GM10248 (cell line): ENCODE measurements at regions of chr5 and their contacts with region 1.

Region 1: DNA sequence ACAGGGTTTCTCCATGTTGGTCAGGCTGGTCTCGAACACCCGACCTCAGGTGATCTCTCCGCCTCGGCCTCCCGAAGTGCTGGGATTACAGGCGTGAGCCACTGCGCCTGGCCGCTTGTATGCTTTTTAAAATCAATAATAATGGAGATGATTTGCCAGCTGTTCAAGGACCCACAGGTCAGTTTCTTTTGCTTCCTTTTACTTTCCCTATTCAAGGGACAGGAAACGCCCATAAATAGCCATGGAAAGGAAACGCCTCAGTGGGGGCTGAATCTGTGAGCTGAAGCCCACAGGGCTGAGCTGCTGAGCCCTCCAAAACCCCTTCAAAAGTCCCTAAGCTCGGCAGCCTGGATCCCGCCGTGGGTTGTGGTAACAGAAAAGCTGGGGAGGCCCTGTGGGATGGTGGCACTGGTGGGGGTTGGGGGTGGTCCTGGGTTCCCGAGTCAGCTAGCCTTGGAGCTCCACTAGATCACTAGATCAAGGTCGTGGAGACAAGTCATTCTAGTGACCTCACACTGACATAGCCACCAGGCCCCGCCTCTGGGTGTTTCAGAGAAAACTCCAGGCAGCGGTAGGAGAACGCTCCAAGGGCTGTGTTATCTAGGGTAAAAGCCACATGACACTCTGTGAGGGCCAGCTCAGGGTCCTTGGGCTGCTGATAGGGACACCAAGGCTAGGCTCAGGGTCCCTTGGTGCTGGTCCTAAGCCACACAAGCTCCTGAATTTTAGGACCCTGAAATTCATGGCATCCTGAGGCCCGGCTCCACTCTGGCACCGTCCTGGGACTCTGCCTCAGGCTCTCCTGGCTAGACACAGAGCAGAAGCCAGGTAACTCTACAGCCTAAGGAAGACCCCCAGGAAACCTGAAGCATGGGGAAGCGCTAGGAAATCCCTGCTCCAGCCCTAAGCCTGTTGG is 18.0 kb upstream of the DUSP1 start:
- DNase-seq: peak; percentile 55
- CTCF ChIP-seq: no peak

Region 2: DNA sequence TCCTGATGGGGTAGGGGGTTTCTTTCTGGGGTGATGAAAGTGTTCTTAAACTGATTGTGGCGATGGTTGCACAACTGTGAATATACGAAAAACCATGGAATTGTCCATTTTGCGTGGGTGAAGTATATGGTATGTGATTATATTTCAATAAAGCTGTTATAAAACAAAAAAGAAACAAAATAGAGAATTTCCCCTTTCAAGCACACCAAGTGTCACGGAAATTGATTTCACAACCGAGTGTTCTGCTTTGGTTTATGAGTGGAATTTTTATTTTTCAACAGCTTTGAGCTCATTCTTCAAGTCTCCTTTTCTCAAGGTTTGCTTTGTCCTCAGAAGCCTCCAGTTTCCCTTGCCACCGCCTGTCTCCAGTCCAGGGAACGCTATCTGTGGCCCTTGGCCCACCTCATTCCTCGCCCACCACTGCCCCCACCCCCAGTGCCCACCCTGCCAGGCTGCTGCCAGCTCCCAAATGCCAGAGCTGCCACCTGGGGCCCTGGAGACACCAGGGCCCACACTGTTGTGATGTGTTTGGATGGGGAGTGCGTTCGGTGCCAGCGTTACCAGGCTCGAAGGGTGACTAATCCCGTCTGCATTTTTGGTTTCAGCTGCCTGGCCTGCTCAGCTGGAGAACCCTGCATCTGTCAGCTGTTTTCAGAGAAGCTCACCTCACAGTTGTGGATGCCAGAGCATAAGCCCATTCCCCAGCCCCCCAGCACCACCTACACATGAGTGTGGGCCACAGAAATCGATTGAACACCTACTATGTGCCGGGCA is 48.4 kb before region 1 on chr5:
- CTCF ChIA-PET with region 1: no interaction called
- POLR2A ChIA-PET with region 1: no interaction called
- DNase-seq: no peak
- CTCF ChIP-seq: no peak

Region 3: GRCh38 chr5:172777881-172778814 is 10.9 kb before region 1 on chr5:
- CTCF ChIA-PET with region 1: interaction called, 57 read pairs
- POLR2A ChIA-PET with region 1: no interaction called
- DNase-seq: no peak
- CTCF ChIP-seq: no peak

Region 4: DNA sequence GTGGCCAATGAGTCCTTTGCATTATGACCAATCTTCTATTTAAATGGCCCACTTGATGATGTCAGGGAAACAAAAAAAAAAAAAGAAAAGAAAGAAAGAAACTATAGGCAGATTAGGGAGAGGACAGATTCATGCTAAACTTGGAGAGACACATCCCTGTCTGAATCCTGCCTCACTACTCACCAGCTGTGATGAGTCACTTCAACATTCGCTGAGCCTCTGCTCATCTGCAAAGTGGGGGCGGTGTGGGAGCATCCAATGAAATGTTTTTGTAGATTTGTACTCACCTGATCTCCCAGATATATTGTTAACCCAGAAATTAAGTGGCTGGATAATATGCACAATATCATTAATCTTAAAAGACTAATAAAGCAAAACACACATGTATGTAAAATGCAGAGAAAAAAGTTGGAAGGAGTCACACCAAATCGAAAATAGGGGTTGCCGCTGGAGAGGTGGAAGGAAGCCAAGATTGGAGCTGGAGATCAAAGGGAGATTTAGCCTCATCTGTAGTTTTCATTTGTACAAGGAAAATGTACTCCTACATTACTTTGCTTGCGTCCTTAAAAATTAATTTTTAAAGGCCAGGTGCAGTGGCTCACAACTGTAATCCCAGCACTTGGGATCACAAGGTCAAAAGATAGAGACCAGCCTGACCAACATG is 28.0 kb after region 1 on chr5:
- CTCF ChIA-PET with region 1: no interaction called
- POLR2A ChIA-PET with region 1: no interaction called
- DNase-seq: no peak
- CTCF ChIP-seq: no peak